AG04450 (cell line): ENCODE measurements at regions of chr15 and their contacts with region 1.

Region 1: DNA sequence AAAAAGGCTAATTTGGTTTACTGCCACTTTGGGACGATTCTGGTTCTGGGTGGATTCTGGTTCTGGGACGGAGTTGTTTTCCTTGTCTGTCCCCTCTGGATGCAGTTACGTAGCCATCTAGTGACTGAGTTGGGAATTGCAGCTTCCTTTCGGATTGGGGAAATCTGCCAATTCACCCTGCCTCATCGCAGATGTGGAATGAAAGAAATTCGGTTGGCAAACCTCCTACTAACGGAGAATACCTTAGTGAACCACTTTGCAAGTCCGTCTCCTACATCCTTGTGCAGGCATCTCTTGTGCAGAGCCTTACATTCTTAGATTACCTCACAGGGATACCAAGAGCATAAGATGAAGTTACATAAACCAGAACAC is 31.5 kb upstream of the AP4E1 start:
- DNase-seq: peak; percentile 91
- H3K4me3 ChIP-seq: peak overlapping the region; percentile 35
- H3K27ac ChIP-seq: no peak overlapping the region
- H3K27me3 ChIP-seq: peaks cover 8% of the 10 kb centered on the region
- CTCF ChIP-seq: peak; percentile 99

Region 2: GRCh38 chr15:50415749-50416404 is 461.1 kb before region 1 on chr15:
- CTCF ChIA-PET with region 1: no interaction called
- POLR2A ChIA-PET with region 1: no interaction called
- DNase-seq: peak; percentile 2
- H3K4me3 ChIP-seq: no peak overlapping the region
- H3K27ac ChIP-seq: no peak overlapping the region
- H3K27me3 ChIP-seq: no peaks in the 10 kb centered on the region
- CTCF ChIP-seq: no peak

Region 3: DNA sequence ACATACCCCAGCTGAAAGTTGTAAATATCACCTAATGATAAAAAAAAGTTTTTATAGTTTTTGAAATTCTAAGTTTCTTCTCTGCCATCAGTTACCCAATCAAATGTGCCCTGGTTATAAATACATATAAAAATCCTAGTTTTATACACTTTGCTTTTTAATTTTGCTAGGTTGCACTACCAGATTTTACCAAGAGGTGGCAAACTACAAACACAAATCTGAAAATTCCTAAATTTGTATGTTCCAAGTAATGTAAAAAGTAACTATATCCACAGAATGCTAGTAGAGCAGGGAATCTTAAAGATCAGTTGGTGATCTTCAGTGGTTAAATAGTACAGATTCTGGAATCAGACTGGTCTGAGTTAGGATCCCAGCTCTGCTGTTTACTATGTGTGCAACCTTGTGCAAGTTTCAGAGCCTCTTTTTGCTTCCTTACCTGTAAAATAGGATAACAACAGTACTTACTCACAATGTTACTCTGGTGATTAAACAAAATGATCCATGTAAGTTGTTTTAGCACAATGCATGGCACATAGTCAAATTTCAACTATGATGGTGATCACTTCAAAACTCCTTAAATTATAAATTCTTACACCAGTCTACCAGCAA is 201.3 kb before region 1 on chr15:
- CTCF ChIA-PET with region 1: interaction called, 66 read pairs
- POLR2A ChIA-PET with region 1: no interaction called
- DNase-seq: no peak
- H3K4me3 ChIP-seq: no peak overlapping the region
- H3K27ac ChIP-seq: no peak overlapping the region
- H3K27me3 ChIP-seq: no peaks in the 10 kb centered on the region
- CTCF ChIP-seq: peak; percentile 62

Region 4: GRCh38 chr15:50718700-50719125 is 158.3 kb before region 1 on chr15:
- CTCF ChIA-PET with region 1: interaction called, 10 read pairs
- POLR2A ChIA-PET with region 1: no interaction called
- DNase-seq: no peak
- H3K4me3 ChIP-seq: no peak overlapping the region
- H3K27ac ChIP-seq: no peak overlapping the region
- H3K27me3 ChIP-seq: no peaks in the 10 kb centered on the region
- CTCF ChIP-seq: no peak

Region 5: GRCh38 chr15:50753463-50753862 is 123.5 kb before region 1 on chr15:
- CTCF ChIA-PET with region 1: no interaction called
- POLR2A ChIA-PET with region 1: no interaction called
- DNase-seq: no peak
- H3K4me3 ChIP-seq: no peak overlapping the region
- H3K27ac ChIP-seq: no peak overlapping the region
- H3K27me3 ChIP-seq: no peaks in the 10 kb centered on the region
- CTCF ChIP-seq: no peak

Region 6: GRCh38 chr15:50857763-50858162 is 19.2 kb before region 1 on chr15:
- CTCF ChIA-PET with region 1: interaction called, 16 read pairs
- POLR2A ChIA-PET with region 1: no interaction called
- DNase-seq: no peak
- H3K4me3 ChIP-seq: no peak overlapping the region
- H3K27ac ChIP-seq: no peak overlapping the region
- H3K27me3 ChIP-seq: peaks cover 5% of the 10 kb centered on the region
- CTCF ChIP-seq: no peak

Region 7: DNA sequence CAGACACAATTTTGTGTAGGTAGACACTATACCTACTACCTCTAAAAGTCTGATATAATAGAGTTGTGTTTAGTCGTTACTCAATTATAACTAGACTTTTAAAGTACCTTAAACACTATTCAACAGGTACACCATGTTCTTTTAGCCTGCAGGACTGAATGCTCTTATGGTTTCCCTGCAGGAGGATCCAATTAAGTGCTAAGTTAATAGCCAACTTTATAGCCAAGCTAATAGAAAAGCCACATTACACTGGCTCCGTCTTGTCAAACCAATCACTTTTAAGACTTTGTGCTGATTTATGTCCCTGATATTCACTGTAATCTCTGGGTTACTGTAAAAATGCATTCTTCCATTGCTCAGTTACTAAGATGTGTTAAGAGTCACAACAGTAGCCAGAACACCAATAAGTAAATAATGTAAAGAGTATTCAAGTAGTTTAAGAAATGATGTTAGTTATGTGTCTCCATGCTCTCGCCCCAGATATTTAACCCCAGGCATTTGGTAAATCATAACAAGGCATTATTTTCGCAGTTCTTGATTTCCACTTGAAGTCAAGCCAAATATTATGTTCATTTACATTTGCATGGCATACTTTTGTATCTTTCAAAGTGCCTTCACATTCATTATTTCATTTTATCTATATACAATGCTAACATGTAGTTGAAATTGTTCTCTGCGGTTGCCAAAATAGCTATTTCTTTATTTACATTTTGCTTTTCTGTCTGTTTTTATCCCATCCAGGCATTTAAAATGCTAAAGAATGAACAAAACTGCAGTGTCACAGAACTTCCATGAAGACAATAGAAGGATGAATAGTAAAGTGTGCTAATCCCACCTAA is 11.2 kb before region 1 on chr15:
- CTCF ChIA-PET with region 1: interaction called, 13 read pairs
- POLR2A ChIA-PET with region 1: no interaction called
- DNase-seq: no peak
- H3K4me3 ChIP-seq: no peak overlapping the region
- H3K27ac ChIP-seq: no peak overlapping the region
- H3K27me3 ChIP-seq: peaks cover 15% of the 10 kb centered on the region
- CTCF ChIP-seq: no peak